Calu3 (cell line): ENCODE measurements at regions of chr3 and their contacts with region 1.

Region 1: DNA sequence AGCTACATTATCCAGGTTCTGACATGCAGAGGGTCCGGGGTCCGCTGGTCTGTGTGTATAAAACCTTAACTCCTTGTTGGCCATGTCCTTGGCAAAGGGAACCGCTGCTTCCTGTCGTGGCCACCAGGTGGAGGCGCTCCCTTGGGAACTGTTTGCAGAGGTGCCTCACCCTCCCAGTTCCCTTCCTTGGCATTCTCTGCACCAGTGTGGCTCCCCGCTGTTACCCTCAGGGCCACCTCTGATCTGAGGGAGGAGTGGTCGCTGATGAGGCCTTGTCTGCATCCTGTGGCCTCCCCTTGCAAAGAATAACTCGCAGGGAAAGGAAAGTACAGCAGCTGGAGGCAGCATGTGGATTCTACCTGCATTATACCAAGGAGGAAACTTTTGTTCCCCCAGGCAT is 89.6 kb downstream of the CHRD start:
- DNase-seq: peak; percentile 78
- H3K4me3 Mint-ChIP-seq: no peak overlapping the region
- H3K27ac Mint-ChIP-seq: no peak overlapping the region
- H3K4me1 Mint-ChIP-seq: no peaks in the 10 kb centered on the region
- H3K27me3 Mint-ChIP-seq: peaks cover 98% of the 10 kb centered on the region
- CTCF ChIP-seq: peak; percentile 96

Region 2: DNA sequence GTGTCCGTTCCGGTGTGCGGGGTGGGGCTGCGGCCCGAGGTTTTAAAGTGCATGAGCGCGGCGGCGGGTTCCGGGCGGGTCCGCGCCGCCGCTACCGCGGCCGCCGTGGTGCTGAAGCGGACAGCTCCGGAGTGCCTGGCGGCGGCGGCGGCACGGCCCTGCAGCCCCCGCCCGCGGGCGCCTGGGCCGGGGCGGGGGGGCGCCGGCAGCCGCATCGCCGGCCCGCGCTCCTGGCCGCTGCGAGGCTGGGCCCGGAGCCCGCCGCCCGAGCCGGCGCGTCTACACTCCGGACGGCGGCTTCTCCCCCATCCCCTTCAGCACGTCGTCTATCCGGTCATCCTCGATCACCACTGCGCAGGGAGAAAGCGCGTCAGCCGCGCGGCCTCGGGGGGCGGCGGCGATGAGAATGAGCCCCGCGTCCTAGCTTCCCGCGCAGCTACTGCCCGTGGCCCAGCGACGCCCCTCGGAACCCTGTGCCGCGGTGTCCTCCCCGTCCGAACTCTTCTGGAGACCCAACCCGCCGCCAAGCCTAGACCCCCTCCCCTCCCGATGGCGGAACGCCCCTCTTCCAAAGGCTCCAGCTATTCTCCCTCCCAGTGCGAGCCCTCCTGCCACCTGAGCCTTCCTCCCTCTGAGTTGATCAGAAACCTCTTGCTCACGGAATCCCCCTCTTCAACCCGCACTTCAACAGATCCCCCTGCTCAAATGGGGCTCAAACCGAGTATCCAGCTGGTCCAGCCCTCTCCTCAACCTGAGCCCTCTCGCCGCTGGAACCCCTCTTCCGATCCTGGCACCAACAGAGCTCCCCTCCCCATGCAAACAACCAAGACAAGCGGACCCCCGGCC is 209.3 kb before region 1 on chr3:
- CTCF ChIA-PET with region 1: no interaction called
- intact Hi-C with region 1: no loop called
- DNase-seq: peak; percentile 66
- H3K4me3 Mint-ChIP-seq: peak overlapping the region; percentile 66
- H3K27ac Mint-ChIP-seq: peak overlapping the region; percentile 62
- H3K4me1 Mint-ChIP-seq: peaks cover 24% of the 10 kb centered on the region
- H3K27me3 Mint-ChIP-seq: peaks cover 68% of the 10 kb centered on the region
- CTCF ChIP-seq: no peak

Region 3: GRCh38 chr3:184371570-184372018 is 97.8 kb before region 1 on chr3:
- CTCF ChIA-PET with region 1: interaction called, 16 read pairs
- intact Hi-C with region 1: loop called (anchors 2 kb)
- DNase-seq: peak; percentile 91
- H3K4me3 Mint-ChIP-seq: no peak overlapping the region
- H3K27ac Mint-ChIP-seq: peak overlapping the region; percentile 58
- H3K4me1 Mint-ChIP-seq: peaks cover 7% of the 10 kb centered on the region
- H3K27me3 Mint-ChIP-seq: peaks cover 48% of the 10 kb centered on the region
- CTCF ChIP-seq: peak; percentile 99

Region 4: GRCh38 chr3:184417619-184418327 is 51.6 kb before region 1 on chr3:
- CTCF ChIA-PET with region 1: interaction called, 4 read pairs
- intact Hi-C with region 1: loop called (anchors 1 kb)
- DNase-seq: peak; percentile 87
- H3K4me3 Mint-ChIP-seq: no peak overlapping the region
- H3K27ac Mint-ChIP-seq: no peak overlapping the region
- H3K4me1 Mint-ChIP-seq: no peaks in the 10 kb centered on the region
- H3K27me3 Mint-ChIP-seq: peaks cover 6% of the 10 kb centered on the region
- CTCF ChIP-seq: peak; percentile 100

Region 5: GRCh38 chr3:184513276-184514170 is 44.1 kb after region 1 on chr3:
- CTCF ChIA-PET with region 1: interaction called, 13 read pairs
- intact Hi-C with region 1: loop called (anchors 1 kb)
- DNase-seq: peak; percentile 94
- H3K4me3 Mint-ChIP-seq: peak overlapping the region; percentile 58
- H3K27ac Mint-ChIP-seq: no peak overlapping the region
- H3K4me1 Mint-ChIP-seq: no peaks in the 10 kb centered on the region
- H3K27me3 Mint-ChIP-seq: peaks cover 100% of the 10 kb centered on the region
- CTCF ChIP-seq: peak; percentile 99

Region 6: GRCh38 chr3:184543843-184544512 is 74.6 kb after region 1 on chr3:
- CTCF ChIA-PET with region 1: interaction called, 5 read pairs
- intact Hi-C with region 1: loop called (anchors 1 kb)
- DNase-seq: peak; percentile 92
- H3K4me3 Mint-ChIP-seq: no peak overlapping the region
- H3K27ac Mint-ChIP-seq: no peak overlapping the region
- H3K4me1 Mint-ChIP-seq: no peaks in the 10 kb centered on the region
- H3K27me3 Mint-ChIP-seq: peaks cover 92% of the 10 kb centered on the region
- CTCF ChIP-seq: peak; percentile 95